Caco-2 (cell line): ENCODE measurements at regions of chr10 and their contacts with region 1.

Region 1: GRCh38 chr10:106571192-106571946 is 593.1 kb downstream of the SORCS1 start:
- DNase-seq: peak in 1 of 2 experiments; percentile 3
- H3K4me3 ChIP-seq: no peak overlapping the region
- H3K4me3 Mint-ChIP-seq: no peak overlapping the region
- H3K27ac Mint-ChIP-seq: no peak overlapping the region
- H3K4me1 ChIP-seq: no peaks in the 10 kb centered on the region
- H3K4me1 Mint-ChIP-seq: no peaks in the 10 kb centered on the region
- H3K27me3 ChIP-seq: no peaks in the 10 kb centered on the region
- H3K27me3 Mint-ChIP-seq: peaks cover 3% of the 10 kb centered on the region
- CTCF ChIP-seq: peak in 1 of 2 experiments; percentile 18

Region 2: GRCh38 chr10:106410331-106410730 is 161.0 kb before region 1 on chr10:
- CTCF ChIA-PET with region 1: no interaction called
- POLR2A ChIA-PET with region 1: no interaction called
- intact Hi-C with region 1: loop called (anchors 10 kb)
- DNase-seq: no peak
- H3K4me3 ChIP-seq: no peak overlapping the region
- H3K4me3 Mint-ChIP-seq: no peak overlapping the region
- H3K27ac Mint-ChIP-seq: no peak overlapping the region
- H3K4me1 ChIP-seq: no peaks in the 10 kb centered on the region
- H3K4me1 Mint-ChIP-seq: no peaks in the 10 kb centered on the region
- H3K27me3 ChIP-seq: no peaks in the 10 kb centered on the region
- H3K27me3 Mint-ChIP-seq: no peaks in the 10 kb centered on the region
- CTCF ChIP-seq: no peak